Ovary (tissue), 10 donors: ENCODE measurements at regions of chr2 and their contacts with region 1.

Region 1: DNA sequence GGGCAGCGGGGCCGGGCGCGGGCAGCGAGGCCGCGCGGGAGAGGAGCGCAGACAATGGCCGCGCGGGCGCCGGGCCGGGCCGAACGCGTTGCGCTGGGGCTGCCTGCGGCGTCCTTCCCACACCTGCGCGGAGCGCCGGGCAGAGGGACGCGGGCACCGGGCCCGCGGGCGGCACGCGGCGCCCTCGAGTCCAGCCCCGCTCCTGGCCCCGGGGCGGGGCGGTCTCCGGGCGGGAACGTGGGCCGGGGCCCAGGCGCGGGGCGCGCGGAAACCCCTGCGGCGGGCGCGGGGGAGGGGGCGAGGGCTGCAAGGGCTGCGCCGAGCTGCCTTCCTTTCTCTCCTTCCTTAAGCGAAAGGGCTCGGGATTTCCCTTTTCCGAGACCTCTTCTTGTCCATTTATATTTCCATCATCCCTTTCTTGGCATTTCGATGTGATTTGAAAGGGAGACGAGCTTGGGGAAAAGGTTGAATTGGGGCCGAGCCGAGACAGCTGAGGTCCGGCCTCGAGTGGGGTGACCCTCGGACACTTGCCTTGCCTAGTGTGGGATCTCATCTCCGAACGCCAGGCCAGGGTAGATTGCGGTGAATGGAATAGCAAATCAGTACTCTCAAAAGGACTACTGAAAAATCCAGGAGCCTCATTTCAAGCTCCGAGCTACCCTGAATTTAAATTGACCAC is 676 bp downstream of the KLHL23 start:
- DNase-seq: peak; percentile 25 to 71 (median 47)
- H3K4me3 ChIP-seq: peak overlapping the region; percentile 63
- H3K27ac ChIP-seq: peak overlapping the region; percentile 44 to 70
- H3K4me1 ChIP-seq: peaks cover 4% of the 10 kb centered on the region
- H3K27me3 ChIP-seq: no peaks in the 10 kb centered on the region
- CTCF ChIP-seq: no peak
- EP300 ChIP-seq: no peak
- POLR2A ChIP-seq: no peak

Region 2: DNA sequence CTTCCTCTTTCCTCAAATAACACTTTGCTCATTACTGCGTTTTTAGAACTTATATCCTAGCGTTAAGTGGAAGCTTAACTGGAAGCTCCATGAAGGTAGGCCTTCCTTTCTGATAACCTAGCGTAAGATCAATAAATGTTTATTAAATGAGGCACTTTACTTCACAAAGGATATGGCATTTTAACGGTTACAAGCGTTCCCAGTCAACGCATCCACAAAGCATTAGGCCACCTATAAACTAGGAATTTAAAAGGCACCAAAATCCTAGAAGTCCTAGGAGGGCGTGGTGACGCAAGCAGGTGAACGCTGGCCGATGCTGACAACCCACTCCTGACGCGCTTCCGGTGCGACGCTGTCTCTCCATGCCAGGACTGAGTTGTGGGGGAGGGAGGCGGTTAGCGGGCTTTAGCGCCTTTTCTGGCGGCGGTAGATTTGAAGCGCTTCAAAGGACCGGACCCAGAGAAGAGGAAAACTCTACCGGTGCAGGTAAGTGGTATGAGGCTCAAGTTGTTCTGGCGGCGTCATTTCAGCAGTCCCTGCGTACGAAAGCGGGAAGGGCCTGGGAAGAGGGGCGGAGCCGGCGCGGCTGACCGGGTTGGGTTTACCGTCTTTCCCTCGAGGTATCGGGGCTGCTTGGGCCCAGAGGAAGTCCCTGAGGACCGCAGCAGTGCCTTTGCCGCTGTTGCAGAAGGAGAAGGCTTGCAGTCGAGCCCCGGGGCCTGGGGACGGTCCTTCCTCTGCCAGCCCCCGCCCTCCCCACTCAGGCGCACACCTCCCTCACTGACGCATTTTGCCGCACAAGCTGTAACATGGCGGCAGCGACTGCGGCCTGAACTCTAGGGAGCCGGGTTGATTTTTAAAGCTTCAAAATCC is 150.1 kb before region 1 on chr2 and contains the start of gene PPIG:
- intact Hi-C with region 1: loop called in 1 of 4 experiments (anchors 10 kb)
- DNase-seq: peak; percentile 89 to 92 (median 91)
- H3K4me3 ChIP-seq: peak within 1 kb of the TSS; percentile 71
- H3K27ac ChIP-seq: peak within 1 kb of the TSS; percentile 85 to 88
- H3K4me1 ChIP-seq: peaks cover 6% of the 10 kb centered on the region
- H3K27me3 ChIP-seq: no peaks in the 10 kb centered on the region
- CTCF ChIP-seq: no peak
- EP300 ChIP-seq: no peak
- POLR2A ChIP-seq: peak; percentile 82
- total RNA-seq, gene PPIG: 35.2 to 64.5 (median 55.4) TPM

Region 3: DNA sequence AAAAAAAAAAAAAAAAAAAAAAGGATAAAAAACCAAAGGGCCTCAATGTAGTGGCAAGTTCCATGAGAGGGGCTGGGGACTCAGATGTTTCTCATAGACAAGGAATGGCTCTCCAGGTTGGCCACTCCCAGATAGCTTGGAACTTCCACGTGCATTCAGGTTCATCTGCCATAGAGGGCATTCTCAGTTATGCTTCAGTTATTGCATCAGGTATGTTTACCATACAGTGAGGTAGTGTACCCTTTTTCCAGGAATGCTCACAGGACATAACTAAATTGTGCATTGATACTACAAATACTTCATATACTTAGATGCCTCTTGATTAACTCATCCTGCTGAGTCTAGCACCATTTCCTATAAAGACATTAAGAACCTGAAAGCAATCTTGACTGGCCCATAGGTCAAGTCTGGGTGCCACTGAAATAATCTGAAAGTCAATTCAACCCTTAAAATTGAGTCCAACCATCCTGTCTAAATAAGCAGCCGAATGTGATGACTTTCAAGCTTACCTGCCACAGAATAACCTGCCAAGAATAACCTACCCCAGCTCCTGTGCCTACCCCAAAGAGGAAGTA is 15.3 kb before region 1 on chr2:
- intact Hi-C with region 1: loop called in 1 of 4 experiments (anchors 1 kb)
- DNase-seq: no peak
- H3K4me3 ChIP-seq: no peak overlapping the region
- H3K27ac ChIP-seq: no peak overlapping the region
- H3K4me1 ChIP-seq: peaks cover 11% of the 10 kb centered on the region
- H3K27me3 ChIP-seq: no peaks in the 10 kb centered on the region
- CTCF ChIP-seq: no peak
- EP300 ChIP-seq: no peak
- POLR2A ChIP-seq: no peak